A673 (cell line): ENCODE measurements at regions of chr9 and their contacts with region 1.

Region 1: DNA sequence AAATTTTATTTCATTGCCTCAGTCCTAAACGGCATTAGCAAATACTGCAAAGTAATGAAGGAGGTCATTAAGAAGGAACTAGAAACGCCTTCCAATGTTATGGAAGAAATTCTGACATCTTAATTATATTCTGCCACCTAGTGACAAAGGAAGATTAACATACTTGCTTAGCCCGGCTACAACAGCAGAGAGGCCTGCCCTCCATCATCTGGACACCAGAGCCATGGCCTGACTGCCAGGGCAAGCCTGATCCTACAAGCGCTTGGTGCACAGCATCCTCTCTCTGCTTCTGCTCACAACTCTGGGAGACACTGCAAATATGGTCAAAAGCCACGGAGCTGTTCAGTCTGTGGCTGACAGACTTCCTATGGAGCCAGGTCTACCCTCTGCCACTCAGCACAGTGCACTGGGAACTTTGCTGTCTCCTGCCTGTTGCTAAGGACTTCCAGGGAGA is 87.3 kb upstream of the SLC44A1 start:
- DNase-seq: peak; percentile 59
- H3K4me3 ChIP-seq: no peak overlapping the region
- H3K27ac ChIP-seq: no peak overlapping the region
- H3K4me1 ChIP-seq: no peaks in the 10 kb centered on the region
- H3K27me3 ChIP-seq: no peaks in the 10 kb centered on the region
- CTCF ChIP-seq: peak; percentile 57

Region 2: GRCh38 chr9:104780799-104781395 is 376.3 kb before region 1 on chr9:
- CTCF ChIA-PET with region 1: no interaction called
- POLR2A ChIA-PET with region 1: no interaction called
- intact Hi-C with region 1: loop called (anchors 5 kb)
- DNase-seq: peak; percentile 44
- H3K4me3 ChIP-seq: no peak overlapping the region
- H3K27ac ChIP-seq: no peak overlapping the region
- H3K4me1 ChIP-seq: no peaks in the 10 kb centered on the region
- H3K27me3 ChIP-seq: no peaks in the 10 kb centered on the region
- CTCF ChIP-seq: peak; percentile 57

Region 3: GRCh38 chr9:104863180-104863883 is 293.8 kb before region 1 on chr9:
- CTCF ChIA-PET with region 1: interaction called, 3 read pairs
- POLR2A ChIA-PET with region 1: no interaction called
- intact Hi-C with region 1: loop called (anchors 1 kb)
- DNase-seq: peak; percentile 76
- H3K4me3 ChIP-seq: no peak overlapping the region
- H3K27ac ChIP-seq: no peak overlapping the region
- H3K4me1 ChIP-seq: peaks cover 7% of the 10 kb centered on the region
- H3K27me3 ChIP-seq: no peaks in the 10 kb centered on the region
- CTCF ChIP-seq: peak; percentile 92

Region 4: GRCh38 chr9:104927912-104928740 is 229.0 kb before region 1 on chr9 and contains the start of gene ABCA1:
- CTCF ChIA-PET with region 1: interaction called, 8 read pairs
- POLR2A ChIA-PET with region 1: no interaction called
- intact Hi-C with region 1: loop called (anchors 5 kb)
- DNase-seq: peak; percentile 79
- H3K4me3 ChIP-seq: peak within 1 kb of the TSS; percentile 47
- H3K27ac ChIP-seq: no peak within 1 kb of the TSS
- H3K4me1 ChIP-seq: no peaks in the 10 kb centered on the region
- H3K27me3 ChIP-seq: no peaks in the 10 kb centered on the region
- CTCF ChIP-seq: no peak
- total RNA-seq, gene ABCA1: 0.69 and 1.6 TPM in 2 replicates

Region 5: DNA sequence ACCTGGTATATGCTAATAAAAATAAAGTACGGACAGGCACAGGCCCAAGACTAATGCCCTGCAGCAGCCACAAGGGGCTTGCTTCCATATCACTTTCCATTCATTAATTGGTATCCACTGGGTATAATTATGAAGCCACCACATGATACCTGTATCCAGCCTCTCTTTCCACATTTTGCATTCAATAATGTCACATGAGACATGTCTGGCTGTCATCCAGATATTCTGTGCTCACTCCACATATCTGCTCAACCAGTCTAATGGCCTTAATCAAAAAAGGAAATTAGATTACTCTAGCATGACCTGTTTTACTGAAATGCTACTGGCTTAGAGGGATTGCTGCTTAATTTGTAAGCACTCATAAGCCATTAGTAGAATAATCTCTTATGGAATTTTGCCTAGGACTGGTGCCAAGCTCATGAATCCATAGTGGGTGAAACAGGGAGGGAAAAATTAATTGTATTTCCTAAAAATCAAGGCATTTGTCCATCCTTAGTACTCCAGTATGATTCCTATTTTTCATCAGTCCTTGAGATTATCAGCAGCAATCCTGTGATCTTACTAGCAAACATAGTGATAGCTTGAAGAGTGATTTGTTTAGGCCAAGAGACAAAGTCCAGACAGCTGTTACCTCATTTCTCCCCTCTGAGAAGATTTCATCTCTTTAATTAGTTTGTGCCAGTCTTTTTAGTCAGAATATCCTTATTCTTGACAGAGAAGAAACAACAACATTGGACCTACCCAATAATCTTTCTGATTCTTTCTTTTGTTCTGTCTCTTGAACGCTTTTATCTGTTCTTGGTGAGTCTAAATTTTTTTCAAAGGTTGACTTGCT is 110.0 kb before region 1 on chr9:
- CTCF ChIA-PET with region 1: no interaction called
- POLR2A ChIA-PET with region 1: no interaction called
- intact Hi-C with region 1: no loop called
- DNase-seq: peak; percentile 91
- H3K4me3 ChIP-seq: no peak overlapping the region
- H3K27ac ChIP-seq: no peak overlapping the region
- H3K4me1 ChIP-seq: peaks cover 8% of the 10 kb centered on the region
- H3K27me3 ChIP-seq: peaks cover 81% of the 10 kb centered on the region
- CTCF ChIP-seq: no peak

Region 6: GRCh38 chr9:105087910-105088888 is 69.0 kb before region 1 on chr9:
- CTCF ChIA-PET with region 1: no interaction called
- POLR2A ChIA-PET with region 1: no interaction called
- intact Hi-C with region 1: no loop called
- DNase-seq: no peak
- H3K4me3 ChIP-seq: no peak overlapping the region
- H3K27ac ChIP-seq: no peak overlapping the region
- H3K4me1 ChIP-seq: no peaks in the 10 kb centered on the region
- H3K27me3 ChIP-seq: no peaks in the 10 kb centered on the region
- CTCF ChIP-seq: no peak

Region 7: DNA sequence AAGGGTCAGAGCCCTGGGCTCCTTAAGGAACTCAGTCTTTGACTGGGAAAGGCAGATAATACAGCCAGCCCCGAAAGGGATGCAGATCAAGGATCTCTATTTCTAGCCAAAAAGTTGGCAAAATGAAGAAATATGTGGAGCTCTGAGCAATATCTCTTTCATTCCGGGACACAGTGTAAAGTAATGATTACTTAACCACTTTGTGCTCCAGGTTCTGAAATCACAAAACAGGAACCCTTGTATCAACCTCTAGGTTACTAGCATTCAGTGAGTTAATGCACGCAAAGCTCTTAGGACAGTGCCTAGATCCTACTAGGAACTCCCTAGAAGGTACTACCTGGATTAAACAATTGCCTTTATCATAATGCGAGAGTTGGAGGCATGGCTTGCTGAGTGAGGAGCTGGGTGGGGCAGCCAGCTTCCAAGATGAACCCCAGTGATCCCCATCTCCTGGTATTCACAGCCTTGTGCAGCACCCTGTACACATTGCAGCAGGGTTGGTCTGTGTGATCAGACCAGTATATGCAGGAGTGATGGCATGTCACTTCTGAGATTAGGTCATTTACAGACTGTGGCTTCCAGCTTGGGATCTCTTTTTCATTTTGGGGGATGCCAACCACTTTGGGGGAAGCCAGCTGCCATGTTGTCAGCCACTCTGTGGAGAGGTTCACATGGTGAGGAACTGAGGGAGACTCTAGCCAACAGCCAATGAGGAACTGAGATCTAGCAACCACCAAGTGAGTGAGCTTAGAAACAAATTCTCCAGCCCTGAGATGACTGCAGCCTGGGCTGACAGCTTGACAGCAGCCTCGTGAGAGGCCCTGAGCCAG is 15.8 kb before region 1 on chr9:
- CTCF ChIA-PET with region 1: no interaction called
- POLR2A ChIA-PET with region 1: no interaction called
- intact Hi-C with region 1: no loop called
- DNase-seq: no peak
- H3K4me3 ChIP-seq: no peak overlapping the region
- H3K27ac ChIP-seq: no peak overlapping the region
- H3K4me1 ChIP-seq: no peaks in the 10 kb centered on the region
- H3K27me3 ChIP-seq: peaks cover 8% of the 10 kb centered on the region
- CTCF ChIP-seq: no peak

Region 8: GRCh38 chr9:105168870-105169319 is 11.7 kb after region 1 on chr9:
- CTCF ChIA-PET with region 1: no interaction called
- POLR2A ChIA-PET with region 1: interaction called, 15 read pairs
- intact Hi-C with region 1: no loop called
- DNase-seq: no peak
- H3K4me3 ChIP-seq: no peak overlapping the region
- H3K27ac ChIP-seq: no peak overlapping the region
- H3K4me1 ChIP-seq: peaks cover 16% of the 10 kb centered on the region
- H3K27me3 ChIP-seq: no peaks in the 10 kb centered on the region
- CTCF ChIP-seq: no peak

Region 9: GRCh38 chr9:105414947-105415661 is 257.9 kb after region 1 on chr9:
- CTCF ChIA-PET with region 1: interaction called, 4 read pairs
- POLR2A ChIA-PET with region 1: no interaction called
- intact Hi-C with region 1: loop called (anchors 1 kb)
- DNase-seq: peak; percentile 66
- H3K4me3 ChIP-seq: no peak overlapping the region
- H3K27ac ChIP-seq: no peak overlapping the region
- H3K4me1 ChIP-seq: no peaks in the 10 kb centered on the region
- H3K27me3 ChIP-seq: no peaks in the 10 kb centered on the region
- CTCF ChIP-seq: peak; percentile 91